Activated CD4-positive, alpha-beta memory T cell treated with anti-CD3 and anti-CD28 coated beads for 36 hours (primary cell): ENCODE measurements at regions of chr11 and their contacts with region 1.

Region 1: DNA sequence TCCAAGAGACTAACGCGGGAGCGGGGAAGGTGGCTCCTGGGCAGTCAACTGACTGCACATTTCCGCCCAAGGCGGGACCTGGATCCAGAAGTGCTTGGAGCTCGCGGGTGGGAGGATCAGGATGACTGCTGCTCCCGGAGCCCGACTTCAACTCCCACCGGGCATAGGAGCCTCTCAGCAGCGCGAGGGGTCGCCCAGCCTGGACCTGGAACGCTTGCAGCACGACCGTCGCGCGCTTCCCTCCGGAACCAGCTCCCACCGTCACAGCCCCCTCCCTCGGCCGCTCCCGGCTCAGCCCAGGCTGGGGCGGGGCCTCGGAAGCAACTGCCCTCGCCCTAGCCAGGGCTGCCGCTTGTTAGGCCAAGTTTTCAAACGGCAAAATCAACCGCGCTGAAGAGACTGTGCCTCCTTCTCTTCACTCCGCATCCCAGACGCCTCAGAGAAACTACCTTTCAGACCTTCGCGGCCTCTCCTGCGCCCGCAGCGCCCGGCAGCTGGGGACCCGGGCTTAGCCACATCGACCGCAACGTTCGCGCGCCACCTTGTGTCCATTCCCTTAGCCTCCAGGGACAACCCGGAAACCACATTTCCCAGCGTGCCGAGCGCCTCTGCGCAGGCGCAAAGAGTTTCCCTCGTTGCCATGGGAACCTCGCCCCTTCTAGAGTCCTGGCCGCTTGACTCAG is 14.0 kb downstream of the SSH3 start:
- DNase-seq: peak; percentile 99
- H3K4me3 Mint-ChIP-seq: peak overlapping the region; percentile 96
- H3K27ac Mint-ChIP-seq: peak overlapping the region; percentile 99
- H3K4me1 Mint-ChIP-seq: peaks cover 28% of the 10 kb centered on the region
- H3K27me3 Mint-ChIP-seq: no peaks in the 10 kb centered on the region

Region 2: DNA sequence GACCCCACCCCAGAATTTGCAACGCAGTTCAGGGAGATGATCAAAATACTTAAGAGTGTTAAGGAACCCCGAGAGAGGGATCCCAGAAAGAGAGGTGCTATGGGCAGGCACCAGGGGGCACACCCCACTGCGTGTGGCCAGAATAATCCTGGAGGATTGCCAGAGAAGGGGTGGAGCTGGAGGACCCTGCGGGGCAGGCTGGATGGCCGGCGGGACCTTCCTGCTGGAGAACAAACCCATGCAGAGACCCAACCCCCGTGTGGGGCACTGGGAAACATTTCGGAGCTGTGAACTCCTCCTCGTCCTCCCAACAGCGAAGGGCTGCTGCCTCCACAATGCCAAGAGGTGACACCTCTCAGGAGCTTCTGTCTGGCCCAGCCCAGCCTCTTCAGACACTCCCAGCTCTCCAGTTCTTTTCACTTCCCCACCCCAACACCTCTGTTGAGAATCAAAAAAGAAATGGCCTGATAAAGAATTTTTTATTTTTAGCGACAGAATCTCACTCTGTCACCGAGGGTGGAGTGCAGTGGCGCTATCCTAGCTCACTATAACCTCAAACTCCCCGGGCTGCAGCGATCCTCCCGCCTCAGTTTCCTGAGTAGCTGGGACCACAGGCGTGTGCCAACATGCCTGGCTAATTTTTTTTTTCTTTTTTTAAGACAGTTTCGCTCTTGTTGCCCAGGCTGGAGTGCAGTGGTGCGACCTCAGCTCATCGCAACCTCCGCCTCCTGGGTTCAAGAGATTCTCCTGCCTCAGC is 235.1 kb before region 1 on chr11:
- CTCF ChIA-PET with region 1: interaction called, 7 read pairs
- POLR2A ChIA-PET with region 1: no interaction called
- intact Hi-C with region 1: loop called (anchors 10 kb)
- DNase-seq: no peak
- H3K4me3 Mint-ChIP-seq: no peak overlapping the region
- H3K27ac Mint-ChIP-seq: no peak overlapping the region
- H3K4me1 Mint-ChIP-seq: peaks cover 20% of the 10 kb centered on the region
- H3K27me3 Mint-ChIP-seq: peaks cover 6% of the 10 kb centered on the region

Region 3: GRCh38 chr11:67095214-67095507 is 222.2 kb before region 1 on chr11:
- CTCF ChIA-PET with region 1: no interaction called
- POLR2A ChIA-PET with region 1: no interaction called
- intact Hi-C with region 1: no loop called
- DNase-seq: no peak
- H3K4me3 Mint-ChIP-seq: no peak overlapping the region
- H3K27ac Mint-ChIP-seq: no peak overlapping the region
- H3K4me1 Mint-ChIP-seq: peaks cover 3% of the 10 kb centered on the region
- H3K27me3 Mint-ChIP-seq: no peaks in the 10 kb centered on the region

Region 4: DNA sequence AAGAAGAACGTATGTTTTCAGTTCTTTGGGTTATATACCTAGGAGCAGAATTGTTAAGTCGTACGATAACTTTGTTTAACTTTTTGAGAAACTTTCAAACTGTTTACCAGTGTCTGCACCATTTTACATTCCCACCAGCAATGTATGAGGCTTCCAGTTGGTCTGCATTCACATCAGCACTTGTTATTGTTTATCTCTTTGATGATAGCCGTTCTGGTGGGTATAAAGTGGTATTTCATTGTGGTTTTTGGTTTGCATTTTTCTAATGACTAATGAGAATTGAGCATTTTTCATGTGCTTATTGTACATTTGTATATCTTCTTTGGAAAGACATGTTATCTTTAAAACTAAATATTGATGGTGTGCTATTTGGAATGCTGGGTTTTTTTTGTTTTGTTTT is 138.5 kb before region 1 on chr11:
- CTCF ChIA-PET with region 1: no interaction called
- POLR2A ChIA-PET with region 1: no interaction called
- intact Hi-C with region 1: no loop called
- DNase-seq: no peak
- H3K4me3 Mint-ChIP-seq: no peak overlapping the region
- H3K27ac Mint-ChIP-seq: no peak overlapping the region
- H3K4me1 Mint-ChIP-seq: peaks cover 13% of the 10 kb centered on the region
- H3K27me3 Mint-ChIP-seq: no peaks in the 10 kb centered on the region

Region 5: DNA sequence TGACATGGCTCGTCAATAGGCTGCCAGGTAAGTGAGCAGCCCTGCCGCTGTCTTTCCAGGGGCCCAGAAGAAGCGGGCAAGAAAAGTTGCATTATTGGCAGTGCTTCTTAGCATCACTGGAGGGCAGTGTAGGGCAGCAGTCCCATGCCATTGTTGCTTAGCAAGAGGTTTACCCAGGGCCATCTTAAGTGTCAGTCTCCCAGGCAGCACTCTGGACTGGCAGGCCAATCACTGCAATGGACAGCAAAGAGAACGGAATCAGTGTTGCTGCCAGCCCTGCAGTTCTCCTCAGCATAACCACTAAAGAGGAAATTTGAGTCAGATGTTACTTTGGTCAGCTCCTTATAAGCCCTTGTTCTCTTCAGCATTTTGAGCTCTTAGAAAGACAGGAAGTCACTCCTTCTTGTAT is 64.5 kb before region 1 on chr11:
- CTCF ChIA-PET with region 1: interaction called, 16 read pairs
- POLR2A ChIA-PET with region 1: no interaction called
- intact Hi-C with region 1: no loop called
- DNase-seq: peak; percentile 49
- H3K4me3 Mint-ChIP-seq: no peak overlapping the region
- H3K27ac Mint-ChIP-seq: peak overlapping the region; percentile 61
- H3K4me1 Mint-ChIP-seq: peaks cover 39% of the 10 kb centered on the region
- H3K27me3 Mint-ChIP-seq: no peaks in the 10 kb centered on the region

Region 6: DNA sequence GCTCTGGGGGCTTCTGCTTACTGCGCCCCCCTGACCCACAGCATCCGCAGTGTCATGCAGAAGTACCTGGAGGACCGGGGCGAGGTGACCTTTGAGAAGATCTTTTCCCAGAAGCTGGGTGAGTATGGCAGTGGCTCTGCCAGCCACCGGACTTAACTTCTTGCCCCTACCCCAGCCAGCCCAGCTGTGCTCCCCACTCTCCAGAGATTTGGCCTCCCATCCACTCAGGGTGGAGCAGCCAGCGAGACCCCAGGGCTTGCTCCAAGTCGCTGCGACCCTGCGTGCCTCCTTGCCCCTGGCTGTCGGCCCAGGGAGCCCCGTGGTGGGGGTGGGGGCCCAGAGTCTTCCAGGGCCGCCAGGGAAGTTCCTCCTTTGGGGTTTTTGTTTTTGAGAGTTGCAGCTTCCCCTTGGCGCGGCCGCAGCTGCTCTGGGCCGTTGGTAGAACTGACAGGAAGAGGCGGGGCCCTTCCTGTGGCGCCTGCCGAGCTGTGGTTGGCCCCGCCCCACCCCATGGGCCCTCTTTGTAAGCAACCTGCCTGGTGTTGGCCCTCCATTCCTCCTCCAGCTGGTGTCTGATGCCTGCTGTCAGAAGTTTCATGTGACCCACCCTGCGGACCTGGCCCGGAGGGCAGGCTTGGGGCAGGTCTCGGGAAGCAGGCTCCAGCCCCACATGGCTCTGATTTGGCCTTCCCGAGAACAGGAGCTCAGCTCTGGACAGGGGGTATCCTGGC is 40.0 kb before region 1 on chr11:
- CTCF ChIA-PET with region 1: interaction called, 19 read pairs
- POLR2A ChIA-PET with region 1: interaction called, 15 read pairs
- intact Hi-C with region 1: no loop called
- DNase-seq: peak; percentile 94
- H3K4me3 Mint-ChIP-seq: peak overlapping the region; percentile 69
- H3K27ac Mint-ChIP-seq: peak overlapping the region; percentile 97
- H3K4me1 Mint-ChIP-seq: peaks cover 70% of the 10 kb centered on the region
- H3K27me3 Mint-ChIP-seq: no peaks in the 10 kb centered on the region

Region 7: GRCh38 chr11:67303132-67303834 is 14.1 kb before region 1 on chr11 and contains the start of gene SSH3:
- CTCF ChIA-PET with region 1: interaction called, 12 read pairs
- POLR2A ChIA-PET with region 1: interaction called, 6 read pairs
- intact Hi-C with region 1: no loop called
- DNase-seq: peak; percentile 62
- H3K4me3 Mint-ChIP-seq: peak within 1 kb of the TSS; percentile 70
- H3K27ac Mint-ChIP-seq: no peak within 1 kb of the TSS
- H3K4me1 Mint-ChIP-seq: peaks cover 13% of the 10 kb centered on the region
- H3K27me3 Mint-ChIP-seq: no peaks in the 10 kb centered on the region
- total RNA-seq, gene SSH3: 14.9 to 19.4 TPM

Region 8: GRCh38 chr11:67382276-67383136 is 65.2 kb after region 1 on chr11:
- CTCF ChIA-PET with region 1: interaction called, 24 read pairs
- POLR2A ChIA-PET with region 1: no interaction called
- intact Hi-C with region 1: no loop called
- DNase-seq: peak; percentile 90
- H3K4me3 Mint-ChIP-seq: no peak overlapping the region
- H3K27ac Mint-ChIP-seq: no peak overlapping the region
- H3K4me1 Mint-ChIP-seq: peaks cover 6% of the 10 kb centered on the region
- H3K27me3 Mint-ChIP-seq: no peaks in the 10 kb centered on the region